Sciatic nerve (tissue), 2 donors: ENCODE measurements at regions of chr11 and their contacts with region 1.

Region 1: DNA sequence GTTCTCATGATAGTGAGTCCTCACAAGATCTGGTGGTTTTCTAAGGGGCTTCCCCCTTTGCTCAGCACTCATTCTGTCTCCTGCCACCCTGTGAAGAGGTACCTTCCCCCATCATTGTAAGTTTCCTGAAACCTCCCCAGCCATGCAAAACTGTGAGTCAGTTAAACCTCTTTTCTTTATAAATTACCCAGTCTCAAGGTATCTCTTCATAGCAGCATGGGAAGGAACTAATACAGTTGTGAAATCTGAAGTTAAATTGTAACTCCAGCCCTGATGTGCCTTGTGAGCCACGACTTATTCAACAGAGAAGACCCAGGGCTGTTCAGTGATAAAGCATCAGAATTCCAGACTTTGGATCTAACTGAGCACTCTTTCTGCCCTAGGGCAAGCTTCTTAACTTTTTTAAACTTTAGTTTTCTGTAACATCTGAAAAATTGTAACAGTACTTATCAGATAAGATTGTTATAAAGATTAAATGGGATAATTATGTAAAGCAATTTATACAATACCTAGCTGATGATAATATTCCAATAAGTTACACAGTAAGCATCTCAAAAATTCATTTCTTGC is 220.0 kb downstream of the TRPC6 start:
- DNase-seq: no peak
- ATAC-seq: no peak

Region 2: GRCh38 chr11:99443276-99443675 is 1920.5 kb before region 1 on chr11:
- intact Hi-C with region 1: loop called (anchors 5 kb)
- DNase-seq: no peak
- ATAC-seq: no peak

Region 3: DNA sequence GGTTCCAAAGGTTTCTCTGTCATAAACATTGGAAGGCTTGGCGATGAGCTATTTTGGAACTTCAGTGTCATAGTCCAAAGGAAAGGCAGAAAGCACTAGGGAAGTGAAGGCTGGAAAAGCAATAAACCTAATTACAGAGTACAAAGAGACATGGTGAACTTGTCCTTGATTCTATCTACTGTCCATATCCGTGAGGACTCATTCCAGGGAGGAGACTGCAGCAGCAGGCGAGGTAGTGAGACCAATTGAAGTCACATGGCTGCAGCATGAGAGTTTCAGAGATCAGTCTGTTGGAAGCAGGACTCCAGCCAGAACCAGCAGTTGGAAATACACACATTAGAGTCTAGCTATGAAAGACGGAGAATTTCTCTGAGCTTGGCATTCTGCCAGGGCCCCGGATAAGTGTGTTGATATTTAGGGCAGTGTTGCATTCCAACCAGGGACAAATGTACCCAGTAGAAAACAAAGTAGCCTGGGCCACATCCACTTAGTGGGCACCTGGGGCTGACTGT is 730.8 kb before region 1 on chr11:
- intact Hi-C with region 1: no loop called
- DNase-seq: peak; percentile 83
- ATAC-seq: peak; percentile 89

Region 4: GRCh38 chr11:101401245-101401644 is 37.5 kb after region 1 on chr11:
- intact Hi-C with region 1: no loop called
- DNase-seq: no peak
- ATAC-seq: no peak